ENCODE measurements at regions of chr1 and their contacts with region 1.

Region 1: DNA sequence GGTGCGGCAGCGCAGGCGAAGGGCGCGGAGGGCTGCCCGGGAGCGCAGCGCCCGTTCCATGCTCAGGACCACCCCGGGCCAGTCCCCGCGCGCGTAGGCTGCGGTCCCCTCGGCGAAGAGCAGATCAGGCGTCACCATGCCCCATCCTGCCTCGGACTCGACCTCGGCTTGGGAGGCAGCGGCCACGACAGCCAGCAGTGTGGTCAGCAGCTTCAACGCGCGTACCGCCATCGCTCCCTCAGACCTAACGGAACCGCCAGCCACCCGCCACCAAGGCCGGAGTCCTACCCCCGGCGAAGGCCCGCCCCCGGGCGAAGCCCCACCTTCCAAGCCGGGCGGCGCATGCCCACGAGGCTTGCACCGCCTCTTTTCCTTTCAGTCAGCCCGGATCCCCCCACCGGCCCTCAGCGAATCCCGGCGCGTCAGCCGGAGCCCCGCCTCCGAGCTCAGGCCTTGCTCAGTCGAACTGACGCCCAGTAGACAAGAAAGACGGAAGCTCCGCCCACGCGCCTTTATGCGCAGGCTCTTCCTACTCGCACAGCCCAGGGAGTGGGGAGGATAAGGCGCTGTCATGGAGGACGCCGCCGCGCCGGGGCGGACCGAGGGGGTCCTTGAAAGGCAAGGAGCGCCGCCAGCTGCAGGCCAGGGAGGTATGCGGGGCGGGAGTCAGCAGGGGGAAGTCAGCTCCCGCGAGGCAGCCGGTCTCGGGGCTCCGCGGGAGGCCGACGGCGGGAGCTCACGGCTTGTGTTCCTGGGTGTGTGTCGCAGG is at the starts of genes C1orf50 and P3H1:
- DNase-seq: peak; percentile 95

Region 2: DNA sequence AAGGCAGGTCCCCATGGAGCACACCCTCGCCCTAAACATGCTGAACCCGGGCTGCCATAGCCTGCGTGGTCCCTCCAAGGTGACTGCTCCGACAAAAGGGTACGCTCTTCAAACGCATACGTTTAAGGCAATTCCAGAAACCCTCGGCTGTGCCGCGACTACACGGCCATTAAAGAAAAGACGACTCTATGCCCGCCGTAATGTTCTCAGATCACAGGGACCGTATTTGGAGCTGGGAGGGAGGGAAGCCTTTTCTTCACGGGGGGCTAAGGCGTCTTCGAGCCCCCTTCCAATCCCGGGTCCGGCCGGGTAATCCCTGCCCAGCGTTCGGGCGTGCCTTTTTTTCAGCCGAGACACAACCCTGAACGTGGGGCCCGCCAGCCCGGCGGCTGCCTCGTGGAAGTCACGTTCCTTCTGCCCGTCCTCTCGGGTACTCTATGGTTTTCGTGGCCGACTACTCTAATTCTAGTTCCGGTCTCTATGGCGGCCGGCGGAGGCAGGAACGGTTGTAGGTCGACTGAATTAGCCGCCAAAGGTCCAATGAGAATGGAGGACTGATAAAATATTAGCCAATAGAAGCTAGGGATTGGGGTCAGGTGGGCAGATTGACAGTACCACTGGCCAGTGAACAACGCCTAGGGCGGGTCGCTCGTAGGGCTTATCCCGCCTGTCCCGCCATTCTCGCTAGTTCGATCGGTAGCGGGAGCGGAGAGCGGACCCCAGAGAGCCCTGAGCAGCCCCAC is 85.0 kb before region 1 on chr1 and contains the start of gene YBX1:
- CTCF ChIA-PET with region 1: interaction called, 3 read pairs
- POLR2A ChIA-PET with region 1: interaction called, 31 read pairs
- DNase-seq: peak; percentile 94

Region 3: DNA sequence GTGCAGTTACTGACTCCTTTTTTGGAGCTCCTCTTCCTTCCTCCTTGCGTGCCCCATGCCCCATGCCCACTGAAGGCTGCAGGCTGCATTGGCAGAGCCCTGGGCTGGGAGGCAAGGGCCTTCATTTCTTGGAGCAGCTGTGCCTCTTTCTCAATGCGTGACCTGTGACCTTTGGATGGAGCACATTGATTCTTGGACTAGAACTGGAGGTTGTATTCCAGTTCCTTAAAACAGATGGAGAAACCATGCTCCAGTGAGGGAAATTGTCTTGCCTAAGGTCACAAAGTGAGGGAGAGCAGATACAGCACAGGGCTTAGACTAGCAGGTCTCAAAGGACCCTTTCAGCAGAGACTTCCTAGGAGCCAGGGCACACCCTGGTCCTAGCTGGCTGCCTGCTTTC is 26.9 kb after region 1 on chr1:
- CTCF ChIA-PET with region 1: no interaction called
- POLR2A ChIA-PET with region 1: interaction called, 15 read pairs
- DNase-seq: no peak

Region 4: GRCh38 chr1:42822800-42823392 is 56.0 kb after region 1 on chr1:
- CTCF ChIA-PET with region 1: no interaction called
- POLR2A ChIA-PET with region 1: interaction called, 22 read pairs
- DNase-seq: no peak

Measured in HEK293T (cell line).